Uterus (tissue), 4 donors: ENCODE measurements at regions of chr11 and their contacts with region 1.

Region 1: DNA sequence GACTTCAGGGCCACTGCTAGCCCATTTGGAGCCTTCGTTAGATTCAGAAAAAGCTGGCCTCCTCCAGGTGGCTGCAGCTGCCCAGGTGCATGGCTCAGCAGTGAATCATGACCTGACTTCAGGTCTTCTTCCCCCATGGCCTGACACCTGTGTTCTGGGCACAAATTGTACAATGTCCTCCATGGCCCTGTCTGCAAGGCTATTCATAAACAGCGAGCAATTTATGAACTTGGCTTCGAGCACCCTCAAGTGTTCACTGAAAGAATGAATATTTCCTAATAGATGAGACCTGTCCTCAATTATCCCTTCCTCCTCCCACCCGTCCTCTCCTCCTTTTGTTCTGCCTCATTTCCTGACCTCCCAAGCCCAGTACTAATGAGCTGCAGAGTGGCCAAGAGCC is 12.2 kb upstream of the VPS37C start:
- DNase-seq: no peak
- H3K4me3 ChIP-seq: no peak overlapping the region
- H3K27ac ChIP-seq: no peak overlapping the region
- H3K4me1 ChIP-seq: no peaks in the 10 kb centered on the region
- H3K27me3 ChIP-seq: no peaks in the 10 kb centered on the region
- CTCF ChIP-seq: peak in 1 of 4 experiments; percentile 11
- POLR2A ChIP-seq: no peak

Region 2: GRCh38 chr11:60831143-60831500 is 342.3 kb before region 1 on chr11:
- intact Hi-C with region 1: loop called (anchors 10 kb)
- DNase-seq: peak; percentile 77 to 80
- H3K4me3 ChIP-seq: no peak overlapping the region
- H3K27ac ChIP-seq: no peak overlapping the region
- H3K4me1 ChIP-seq: no peaks in the 10 kb centered on the region
- H3K27me3 ChIP-seq: no peaks in the 10 kb centered on the region
- CTCF ChIP-seq: peak; percentile 85 to 89 (median 88)
- POLR2A ChIP-seq: no peak

Region 3: GRCh38 chr11:61111786-61112517 is 61.5 kb before region 1 on chr11:
- intact Hi-C with region 1: no loop called
- DNase-seq: no peak
- H3K4me3 ChIP-seq: no peak overlapping the region
- H3K27ac ChIP-seq: no peak overlapping the region
- H3K4me1 ChIP-seq: no peaks in the 10 kb centered on the region
- H3K27me3 ChIP-seq: no peaks in the 10 kb centered on the region
- CTCF ChIP-seq: no peak
- POLR2A ChIP-seq: no peak